Activated CD4-positive, alpha-beta T cell treated with anti-CD3 and anti-CD28 coated beads, Interleukin-2, amount 10 ng/mL, durations not matched to agents 7 days and 5 days (primary cell): ENCODE measurements at regions of chr15 and their contacts with region 1.

Region 1: GRCh38 chr15:41936649-41937567 is 35.4 kb downstream of the EHD4 start:
- DNase-seq: peak; percentile 82
- H3K4me3 Mint-ChIP-seq: peak overlapping the region; percentile 57
- H3K27ac Mint-ChIP-seq: peak overlapping the region; percentile 99
- H3K4me1 Mint-ChIP-seq: peaks cover 71% of the 10 kb centered on the region
- H3K27me3 Mint-ChIP-seq: no peaks in the 10 kb centered on the region

Region 2: DNA sequence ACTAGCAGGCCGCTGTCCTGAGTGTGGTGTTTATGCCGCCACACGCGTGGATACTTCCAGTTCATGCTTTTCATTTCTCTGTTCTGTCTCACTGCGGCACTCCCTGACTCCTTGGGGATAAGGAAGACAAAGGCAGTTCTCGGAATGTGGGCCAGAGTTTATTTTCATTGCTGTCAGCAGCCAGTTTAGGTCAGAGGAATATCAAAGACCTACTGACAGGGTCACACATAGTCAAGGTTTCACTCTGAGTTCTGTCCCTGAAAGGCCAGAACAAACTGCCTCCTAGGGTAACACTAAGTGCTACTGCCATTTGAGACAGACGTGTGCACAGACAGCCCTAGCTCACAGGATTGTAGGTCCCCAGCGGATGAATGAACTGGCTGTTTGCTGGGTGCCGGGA is 15.7 kb before region 1 on chr15:
- CTCF ChIA-PET with region 1: interaction called, 18 read pairs
- POLR2A ChIA-PET with region 1: no interaction called
- DNase-seq: no peak
- H3K4me3 Mint-ChIP-seq: no peak overlapping the region
- H3K27ac Mint-ChIP-seq: peak overlapping the region; percentile 61
- H3K4me1 Mint-ChIP-seq: peaks cover 45% of the 10 kb centered on the region
- H3K27me3 Mint-ChIP-seq: no peaks in the 10 kb centered on the region

Region 3: DNA sequence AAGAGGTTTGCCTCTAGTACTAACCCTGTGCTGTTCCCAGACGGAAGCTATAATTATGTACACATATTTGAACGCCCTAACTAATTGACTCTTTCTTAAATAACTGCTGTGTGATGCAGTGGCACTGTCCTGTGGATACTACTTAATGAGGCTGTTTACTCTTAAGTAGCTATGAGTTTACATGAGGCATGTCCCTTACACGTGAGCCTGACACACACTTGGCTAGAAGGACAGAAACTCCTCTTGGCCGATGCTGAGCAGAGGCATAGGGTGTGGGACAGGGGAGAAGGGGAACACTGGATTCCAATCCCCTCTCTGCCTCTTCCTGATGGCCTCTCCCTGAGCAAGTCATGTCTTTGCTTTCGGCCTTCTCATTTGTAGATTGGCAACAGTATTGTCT is 13.6 kb after region 1 on chr15:
- CTCF ChIA-PET with region 1: interaction called, 36 read pairs
- POLR2A ChIA-PET with region 1: no interaction called
- DNase-seq: no peak
- H3K4me3 Mint-ChIP-seq: no peak overlapping the region
- H3K27ac Mint-ChIP-seq: no peak overlapping the region
- H3K4me1 Mint-ChIP-seq: peaks cover 3% of the 10 kb centered on the region
- H3K27me3 Mint-ChIP-seq: no peaks in the 10 kb centered on the region

Region 4: GRCh38 chr15:41972253-41973242 is 35.6 kb after region 1 on chr15 and contains the start of gene EHD4:
- CTCF ChIA-PET with region 1: interaction called, 3 read pairs
- POLR2A ChIA-PET with region 1: interaction called, 11 read pairs
- DNase-seq: peak; percentile 97
- H3K4me3 Mint-ChIP-seq: peak within 1 kb of the TSS; percentile 90
- H3K27ac Mint-ChIP-seq: peak within 1 kb of the TSS; percentile 96
- H3K4me1 Mint-ChIP-seq: peaks cover 52% of the 10 kb centered on the region
- H3K27me3 Mint-ChIP-seq: peaks cover 18% of the 10 kb centered on the region
- total RNA-seq, gene EHD4: 14.5 TPM